ENCODE measurements at regions of chr15 and their contacts with region 1.

Region 1: DNA sequence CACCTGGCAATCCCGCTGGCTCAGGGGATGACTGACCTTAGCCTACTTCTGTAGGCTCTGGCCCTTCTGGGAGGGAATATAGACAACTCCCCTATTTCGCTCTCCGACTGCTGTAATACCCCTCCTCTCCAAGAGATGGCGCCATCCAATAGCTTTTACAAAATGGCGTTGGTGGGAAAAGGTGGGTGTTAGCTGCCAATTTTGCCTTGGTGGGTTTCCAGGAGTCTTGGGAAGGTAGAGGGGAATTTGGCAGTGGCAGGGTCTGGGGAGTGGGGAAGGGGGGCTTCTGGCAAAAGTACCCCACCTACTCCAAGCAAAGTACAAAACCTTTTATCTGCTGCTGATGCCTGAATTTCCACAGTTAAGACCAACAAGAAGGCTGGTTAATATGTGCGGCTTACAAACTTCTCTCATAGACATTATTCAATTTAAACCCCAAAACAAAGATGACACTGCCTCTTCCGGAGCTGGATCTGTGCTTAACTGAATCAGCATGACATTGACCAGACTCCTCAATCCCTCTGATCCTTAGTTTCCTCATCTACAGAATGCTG is 62.1 kb downstream of the RASGRF1 start:
- DNase-seq: peak; percentile 89

Region 2: DNA sequence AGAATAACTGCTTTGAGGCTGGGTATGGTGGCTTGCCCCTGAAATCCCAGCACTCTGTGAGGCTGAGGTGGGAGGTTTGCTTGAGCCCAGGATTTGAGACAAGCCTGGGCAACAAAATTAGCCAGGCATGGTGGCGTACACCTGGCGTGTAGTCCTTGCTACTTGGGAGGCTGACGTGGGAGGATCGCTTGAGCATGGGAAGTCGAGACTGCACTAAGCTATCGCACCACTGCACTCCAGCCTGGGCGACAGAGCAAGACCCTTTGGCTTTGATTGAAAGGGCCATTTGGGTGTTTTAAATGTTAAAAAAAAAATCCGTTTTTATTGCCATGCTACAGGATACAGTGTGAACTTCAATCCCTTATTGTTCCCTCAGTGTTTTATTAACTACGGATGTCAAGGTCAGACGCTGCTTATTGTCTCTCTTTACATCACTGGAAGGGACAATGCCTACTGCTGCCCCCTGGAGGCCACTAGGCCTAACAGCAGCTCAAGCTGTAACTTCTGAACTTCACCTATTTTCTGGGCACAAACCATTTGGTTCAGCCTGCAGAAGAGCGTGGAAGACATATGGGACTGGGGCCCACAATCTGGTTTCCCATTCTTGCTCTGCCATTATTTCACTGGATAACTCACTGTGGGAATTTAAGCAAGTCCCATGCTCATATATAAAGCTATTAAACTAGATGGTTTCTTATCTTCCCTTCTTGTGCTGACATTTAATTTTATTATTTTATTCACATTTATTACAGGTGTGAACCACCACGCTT is 605.7 kb before region 1 on chr15:
- in situ Hi-C with region 1: no loop called
- DNase-seq: peak; percentile 90

Region 3: GRCh38 chr15:78909791-78910228 is 118.7 kb before region 1 on chr15:
- in situ Hi-C with region 1: loop called (anchors 10 kb)
- DNase-seq: peak; percentile 76

Region 4: DNA sequence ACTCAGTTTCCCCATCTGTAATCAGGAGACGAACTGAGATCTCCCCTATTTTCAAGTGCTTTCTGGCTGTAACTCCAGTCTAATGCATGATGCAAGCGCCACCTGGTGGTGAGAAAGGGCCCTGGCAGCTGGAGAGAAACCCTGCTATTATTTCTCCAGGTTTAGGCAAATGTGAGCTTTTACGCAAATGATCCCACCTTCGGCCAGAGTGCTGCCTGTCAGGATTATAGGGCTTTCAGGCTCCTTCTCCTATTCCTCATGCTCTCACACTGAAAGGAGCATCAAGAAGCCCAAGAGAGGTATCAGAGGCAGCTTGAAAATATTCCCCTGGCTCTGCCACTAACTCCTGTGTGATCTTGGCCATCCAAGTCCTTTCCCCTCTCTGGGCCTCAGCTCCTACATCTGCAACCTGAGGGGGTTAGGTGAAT is 156.0 kb after region 1 on chr15:
- in situ Hi-C with region 1: loop called (anchors 10 kb)
- DNase-seq: peak; percentile 84

Measured in KBM-7 (cell line).